K562 (cell line): ENCODE measurements at regions of chr19 and their contacts with region 1.

Region 1: GRCh38 chr19:47790398-47790814 is 11.9 kb downstream of the SELENOW start:
- DNase-seq: peak; percentile 85 to 88 (median 87)
- ATAC-seq: peak; percentile 95
- H3K4me3 ChIP-seq: no peak overlapping the region
- H3K27ac ChIP-seq: no peak overlapping the region
- H3K4me1 ChIP-seq: no peaks in the 10 kb centered on the region; a peak in 1 of 5 replicates
- H3K27me3 ChIP-seq: no peaks in the 10 kb centered on the region
- CTCF ChIP-seq: peak; percentile 80 to 94 (median 89)
- EP300 ChIP-seq: no peak
- POLR2A ChIP-seq: no peak
- RAD21 ChIP-seq: 0 out of 4 replicates have a peak, but pooled peaks of 1 of the 2 experiments have one; percentile 35

Region 2: GRCh38 chr19:47697863-47698609 is 92.4 kb before region 1 on chr19:
- CTCF ChIA-PET with region 1: interaction called, 18 read pairs
- POLR2A ChIA-PET with region 1: no interaction called
- in situ Hi-C with region 1: no loop called
- intact Hi-C with region 1: no loop called
- DNase-seq: peak; percentile 82 to 86 (median 83)
- ATAC-seq: peak; percentile 92
- H3K4me3 ChIP-seq: no peak overlapping the region
- H3K27ac ChIP-seq: no peak overlapping the region
- H3K4me1 ChIP-seq: peaks cover 0 to 29% of the 10 kb centered on the region in 2 experiments; a peak in 2 of 5 replicates
- H3K27me3 ChIP-seq: no peaks in the 10 kb centered on the region
- CTCF ChIP-seq: peak; percentile 93 to 99 (median 98)
- EP300 ChIP-seq: no peak
- POLR2A ChIP-seq: no peak
- RAD21 ChIP-seq: peak; percentile 95 to 98

Region 3: DNA sequence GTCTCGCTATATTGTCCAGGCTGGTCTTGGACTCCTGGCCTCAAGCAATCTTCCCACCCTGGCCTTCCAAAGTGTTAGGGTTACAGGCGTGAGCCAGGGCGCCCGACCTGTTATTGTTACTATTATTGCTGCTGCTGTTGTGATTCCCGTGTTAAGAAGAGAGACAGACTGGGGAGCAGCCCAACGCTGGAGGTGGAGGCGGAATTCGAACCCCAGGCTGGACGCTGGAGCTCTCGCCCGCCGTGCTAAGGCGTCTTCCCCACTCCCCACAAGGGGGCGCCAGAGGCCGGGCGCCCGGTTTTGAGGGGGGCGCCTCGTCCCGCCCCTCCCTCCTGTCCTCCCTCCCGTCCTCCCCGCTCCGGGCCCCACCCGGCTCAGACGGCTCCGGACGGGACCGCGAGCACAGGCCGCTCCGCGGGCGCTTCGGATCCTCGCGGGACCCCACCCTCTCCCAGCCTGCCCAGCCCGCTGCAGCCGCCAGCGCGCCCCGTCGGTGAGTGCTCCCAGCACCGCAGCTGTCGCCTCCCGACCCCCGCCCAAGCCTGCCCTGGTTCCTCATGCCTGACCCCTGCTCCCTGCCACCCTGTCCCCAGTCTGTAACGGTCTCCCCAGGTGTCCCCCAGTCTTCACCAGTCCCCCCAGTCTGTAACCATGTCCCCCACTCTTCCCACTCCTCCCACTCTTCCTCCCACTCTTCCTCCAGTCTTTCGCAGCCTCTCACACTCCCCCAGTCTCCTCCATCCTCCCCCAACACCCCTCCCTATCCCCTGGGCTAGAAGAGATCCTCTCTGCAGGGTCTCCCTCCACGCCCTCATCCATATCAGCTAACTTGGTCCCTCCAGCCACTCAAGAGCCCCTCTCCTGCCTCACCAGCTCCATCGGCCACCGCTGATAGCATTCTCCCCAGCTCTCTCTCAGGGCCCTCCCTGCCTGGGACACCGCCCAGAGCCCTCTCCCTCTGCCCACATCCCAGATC is 77.1 kb before region 1 on chr19 and contains the start of gene EHD2:
- CTCF ChIA-PET with region 1: interaction called, 5 read pairs
- POLR2A ChIA-PET with region 1: no interaction called
- in situ Hi-C with region 1: loop called (anchors 5 kb)
- intact Hi-C with region 1: loop called (anchors 2 kb)
- DNase-seq: peak; percentile 89 to 97 (median 94)
- ATAC-seq: peak; percentile 92
- H3K4me3 ChIP-seq: peak within 1 kb of the TSS; percentile 83
- H3K27ac ChIP-seq: peak within 1 kb of the TSS; percentile 63
- H3K4me1 ChIP-seq: peaks cover 13 to 22% of the 10 kb centered on the region in 2 experiments
- H3K27me3 ChIP-seq: no peaks in the 10 kb centered on the region
- CTCF ChIP-seq: peak; percentile 90 to 93 (median 93)
- EP300 ChIP-seq: no peak
- POLR2A ChIP-seq: peak; percentile 63; the same call in 1 of the 2 replicates
- RAD21 ChIP-seq: peak; percentile 96 to 98
- polyA plus RNA-seq, gene EHD2: 1.7 to 2.1 TPM

Region 4: DNA sequence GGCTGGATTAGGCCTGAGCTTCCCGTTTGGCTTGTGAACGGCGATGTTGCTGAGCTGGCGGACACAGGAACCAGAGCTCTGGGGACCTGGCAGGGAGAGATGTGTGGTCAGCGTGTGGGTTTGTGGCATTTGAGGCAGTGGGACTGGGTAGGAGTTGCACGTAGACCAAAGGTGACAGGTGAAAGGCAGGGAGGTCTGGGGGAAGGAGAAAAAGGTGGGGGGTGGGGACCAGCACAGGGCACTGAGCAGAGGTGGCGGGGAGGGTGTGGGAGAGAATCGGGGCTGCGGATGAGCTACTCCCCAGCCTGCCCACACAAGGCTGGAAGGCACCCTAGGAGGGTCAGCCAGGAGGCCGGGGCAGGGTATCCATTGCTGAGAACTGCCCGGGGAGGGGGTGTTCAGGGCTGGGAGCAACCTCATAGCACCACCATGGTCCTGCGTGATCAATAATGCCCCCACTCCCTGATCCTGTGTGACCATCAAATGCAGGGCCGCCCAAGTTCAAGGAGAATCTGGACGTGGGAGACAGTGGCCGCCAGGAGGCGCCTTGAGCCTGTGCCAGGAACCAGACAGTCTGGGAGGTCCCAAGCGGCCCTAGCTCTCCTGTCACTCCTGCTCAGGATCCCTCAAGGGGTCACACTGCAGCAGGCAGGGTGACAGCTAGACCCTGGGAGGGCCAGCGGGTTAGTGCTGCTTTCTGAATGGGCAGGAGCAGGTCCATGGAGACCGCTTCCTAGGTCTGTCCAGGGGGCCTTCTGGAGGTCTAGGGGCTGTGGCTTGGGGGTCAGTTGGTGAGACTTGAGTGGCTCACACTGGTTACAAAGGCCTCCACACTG is 24.7 kb before region 1 on chr19:
- CTCF ChIA-PET with region 1: interaction called, 30 read pairs
- POLR2A ChIA-PET with region 1: interaction called, 3 read pairs
- in situ Hi-C with region 1: no loop called
- intact Hi-C with region 1: loop called (anchors 1 kb)
- DNase-seq: peak; percentile 60 to 86 (median 65)
- ATAC-seq: peak; percentile 95
- H3K4me3 ChIP-seq: no peak overlapping the region
- H3K27ac ChIP-seq: no peak overlapping the region
- H3K4me1 ChIP-seq: peaks cover 5 to 25% of the 10 kb centered on the region in 2 experiments; a peak in 3 of 5 replicates
- H3K27me3 ChIP-seq: no peaks in the 10 kb centered on the region
- CTCF ChIP-seq: peak; percentile 87 to 91 (median 89)
- EP300 ChIP-seq: no peak
- POLR2A ChIP-seq: no peak
- RAD21 ChIP-seq: peak; percentile 54 to 86

Region 5: GRCh38 chr19:47863514-47863936 is 73.1 kb after region 1 on chr19:
- CTCF ChIA-PET with region 1: no interaction called
- POLR2A ChIA-PET with region 1: no interaction called
- in situ Hi-C with region 1: no loop called
- intact Hi-C with region 1: no loop called
- DNase-seq: peak; percentile 89 to 93 (median 90)
- ATAC-seq: peak; percentile 100
- H3K4me3 ChIP-seq: no peak overlapping the region
- H3K27ac ChIP-seq: no peak overlapping the region
- H3K4me1 ChIP-seq: peaks cover 0 to 6% of the 10 kb centered on the region in 2 experiments; a peak in 3 of 5 replicates
- H3K27me3 ChIP-seq: no peaks in the 10 kb centered on the region; a peak in 1 of 5 replicates
- CTCF ChIP-seq: peak; percentile 94 to 99 (median 98)
- EP300 ChIP-seq: no peak; the same call in 1 of the 2 replicates
- POLR2A ChIP-seq: no peak
- RAD21 ChIP-seq: peak; percentile 78 to 90

Region 6: DNA sequence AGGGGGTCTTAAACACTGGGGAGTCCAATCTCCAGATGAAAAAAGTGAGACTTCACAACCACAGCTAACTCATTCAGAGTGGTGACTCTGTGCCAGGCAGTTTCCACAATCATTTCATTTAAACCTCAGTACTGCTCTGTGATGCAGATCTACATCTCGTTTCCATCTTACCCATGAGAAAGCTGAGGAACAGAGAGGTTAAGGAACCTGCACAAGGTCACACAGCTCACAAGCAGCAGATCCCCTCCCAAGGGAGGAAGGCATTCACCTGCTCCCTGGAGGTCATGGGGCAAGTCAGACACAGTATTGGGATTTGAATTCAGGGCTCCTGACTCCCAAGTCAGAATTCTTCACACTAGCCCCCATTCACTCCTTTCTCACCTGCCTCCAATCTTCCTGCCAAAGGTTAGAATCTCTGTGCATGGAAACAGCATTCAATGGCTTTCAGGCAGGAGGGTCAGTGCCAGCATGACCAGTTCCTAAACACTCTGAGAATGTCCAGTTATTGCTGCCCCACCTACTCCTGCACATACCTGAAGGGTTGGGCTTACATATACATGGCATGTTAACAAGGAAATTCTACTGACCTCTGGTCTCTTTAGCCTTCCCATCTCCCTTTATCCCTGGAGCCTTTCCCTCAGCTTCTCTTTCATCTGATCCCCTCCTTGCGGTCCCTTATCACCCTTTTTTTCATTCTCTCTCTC is 251.6 kb after region 1 on chr19:
- CTCF ChIA-PET with region 1: no interaction called
- POLR2A ChIA-PET with region 1: no interaction called
- in situ Hi-C with region 1: no loop called
- intact Hi-C with region 1: no loop called
- DNase-seq: no peak
- ATAC-seq: no peak
- H3K4me3 ChIP-seq: no peak overlapping the region
- H3K27ac ChIP-seq: no peak overlapping the region
- H3K4me1 ChIP-seq: peaks cover 3% of the 10 kb centered on the region in 2 experiments; a peak in 2 of 5 replicates
- H3K27me3 ChIP-seq: peaks cover 3 to 12% of the 10 kb centered on the region in 2 experiments; a peak in 3 of 5 replicates
- CTCF ChIP-seq: no peak
- EP300 ChIP-seq: no peak
- POLR2A ChIP-seq: no peak
- RAD21 ChIP-seq: no peak